Activated T-helper 2 cell treated with anti-CD3 and anti-CD28 coated beads, Interferon-gamma antibody, Interleukin-2, Interleukin-4, amounts not matched to agents 10 μg/mL and 5 μg/mL and 100 μg/mL, durations not matched to agents 14 hours and 24 hours and 36 hours (primary cell): ENCODE measurements at regions of chrX and their contacts with region 1.

Region 1: DNA sequence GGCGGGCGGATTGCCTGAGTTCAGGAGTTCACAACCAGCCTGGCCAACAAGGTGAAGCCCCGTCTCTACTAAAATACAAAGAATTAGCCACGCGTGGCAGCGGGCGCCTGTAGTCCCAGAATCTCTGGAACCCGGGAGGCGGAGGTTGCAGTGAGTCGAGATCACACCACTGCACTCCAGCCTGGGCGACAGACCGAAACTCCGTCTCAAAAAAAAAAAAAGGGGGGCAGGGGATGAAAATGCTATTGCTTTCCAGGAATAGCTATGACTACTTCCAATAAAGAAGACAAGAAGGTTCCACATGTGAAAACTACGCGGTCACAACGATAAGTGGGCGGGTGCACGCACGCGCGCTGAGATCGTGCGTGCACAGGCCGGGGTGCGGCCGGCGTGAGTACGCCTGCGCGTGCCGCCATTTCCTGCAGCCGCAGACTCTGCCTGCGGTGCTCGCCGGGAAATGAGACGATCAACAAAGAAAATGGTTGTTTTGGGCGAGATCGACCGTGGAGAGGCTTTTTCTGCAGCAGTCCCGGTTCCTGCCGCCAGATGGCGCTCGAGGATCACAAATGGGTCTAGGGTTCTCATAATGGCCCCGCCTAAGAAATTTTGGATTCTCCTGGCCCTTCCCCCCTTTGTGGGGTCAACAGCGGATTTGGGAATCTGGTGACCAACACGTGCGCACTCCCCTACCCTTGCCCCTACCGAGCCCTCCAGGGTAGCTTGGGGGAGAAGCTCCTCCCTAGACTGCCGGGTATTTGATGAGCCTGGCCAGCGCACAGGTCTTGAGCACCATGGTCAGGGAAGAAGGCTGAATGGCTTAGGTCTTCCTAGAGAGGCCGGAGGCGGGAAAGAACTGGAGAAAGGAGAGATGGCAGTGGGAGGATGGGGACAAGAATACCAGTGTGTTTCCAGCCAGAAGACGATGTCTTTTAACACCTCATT is 35.1 kb downstream of the PNMA5 start:
- DNase-seq: peak; percentile 82
- H3K4me3 Mint-ChIP-seq: peak overlapping the region; percentile 47
- H3K27ac Mint-ChIP-seq: peak overlapping the region; percentile 81
- H3K4me1 Mint-ChIP-seq: peaks cover 4% of the 10 kb centered on the region
- H3K27me3 Mint-ChIP-seq: no peaks in the 10 kb centered on the region

Region 2: DNA sequence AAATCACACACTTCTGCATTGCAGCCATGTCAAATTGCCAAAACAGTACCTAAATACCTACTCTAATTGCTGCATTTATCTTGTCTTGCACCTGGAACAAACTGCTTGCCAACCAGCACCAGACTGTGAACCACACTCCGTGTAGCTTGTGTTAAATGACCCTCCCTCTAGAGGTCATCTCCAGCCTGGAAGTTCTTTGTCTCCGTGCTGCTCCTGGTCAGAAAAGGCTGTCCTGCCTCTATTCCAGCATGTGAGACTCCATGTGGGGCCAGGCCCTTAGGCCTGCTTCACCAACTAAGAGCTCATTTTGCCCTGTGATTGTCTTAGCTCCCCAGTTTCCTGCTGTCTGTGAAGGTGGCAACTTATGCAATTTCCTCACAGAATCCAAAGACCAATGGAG is 1196.0 kb before region 1 on chrX:
- intact Hi-C with region 1: no loop called
- DNase-seq: no peak
- H3K4me3 Mint-ChIP-seq: no peak overlapping the region
- H3K27ac Mint-ChIP-seq: no peak overlapping the region
- H3K4me1 Mint-ChIP-seq: no peaks in the 10 kb centered on the region
- H3K27me3 Mint-ChIP-seq: no peaks in the 10 kb centered on the region

Region 3: DNA sequence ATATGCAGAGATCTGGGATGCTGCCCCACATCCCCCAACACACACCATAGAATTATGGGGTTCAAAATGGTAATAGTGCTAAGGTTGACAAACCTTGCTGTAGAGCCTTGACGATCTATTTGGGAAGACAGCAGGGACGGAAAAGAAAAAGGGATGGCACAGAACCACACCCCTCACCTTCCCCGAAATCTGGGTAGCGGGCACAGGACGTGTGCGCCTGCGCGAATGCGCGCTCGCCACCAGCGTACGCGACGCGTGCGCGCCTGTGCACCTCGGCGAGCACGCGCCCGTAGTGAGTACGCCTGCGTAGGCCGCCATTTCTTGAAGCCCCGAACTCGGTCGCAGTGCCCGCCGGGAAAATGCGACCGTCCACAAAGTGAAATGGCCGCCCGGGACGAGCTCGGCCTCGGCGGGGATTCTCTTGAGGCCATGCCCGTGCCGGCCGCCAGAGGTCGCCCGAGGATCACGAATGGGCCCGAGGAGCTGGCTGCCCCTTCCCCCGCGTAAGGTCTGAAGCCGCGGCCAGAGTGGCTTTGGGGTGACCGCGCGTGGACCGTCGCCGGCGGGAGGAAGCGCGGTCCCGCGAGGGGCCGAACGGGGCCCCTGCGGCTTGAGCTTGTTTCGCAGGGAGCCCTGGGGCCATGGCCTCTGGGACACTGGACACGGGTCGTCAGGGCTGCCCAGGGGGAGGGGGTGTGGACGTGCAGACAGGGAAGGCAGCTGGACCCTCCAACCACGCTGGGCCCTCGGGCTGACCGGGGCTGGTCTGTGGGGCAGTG is 17.3 kb before region 1 on chrX:
- intact Hi-C with region 1: loop called (anchors 1 kb)
- DNase-seq: peak; percentile 84
- H3K4me3 Mint-ChIP-seq: peak overlapping the region; percentile 80
- H3K27ac Mint-ChIP-seq: peak overlapping the region; percentile 76
- H3K4me1 Mint-ChIP-seq: peaks cover 7% of the 10 kb centered on the region
- H3K27me3 Mint-ChIP-seq: peaks cover 2% of the 10 kb centered on the region

Region 4: GRCh38 chrX:153003981-153004380 is 45.2 kb after region 1 on chrX:
- intact Hi-C with region 1: no loop called
- DNase-seq: no peak
- H3K4me3 Mint-ChIP-seq: no peak overlapping the region
- H3K27ac Mint-ChIP-seq: no peak overlapping the region
- H3K4me1 Mint-ChIP-seq: no peaks in the 10 kb centered on the region
- H3K27me3 Mint-ChIP-seq: peaks cover 10% of the 10 kb centered on the region

Region 5: DNA sequence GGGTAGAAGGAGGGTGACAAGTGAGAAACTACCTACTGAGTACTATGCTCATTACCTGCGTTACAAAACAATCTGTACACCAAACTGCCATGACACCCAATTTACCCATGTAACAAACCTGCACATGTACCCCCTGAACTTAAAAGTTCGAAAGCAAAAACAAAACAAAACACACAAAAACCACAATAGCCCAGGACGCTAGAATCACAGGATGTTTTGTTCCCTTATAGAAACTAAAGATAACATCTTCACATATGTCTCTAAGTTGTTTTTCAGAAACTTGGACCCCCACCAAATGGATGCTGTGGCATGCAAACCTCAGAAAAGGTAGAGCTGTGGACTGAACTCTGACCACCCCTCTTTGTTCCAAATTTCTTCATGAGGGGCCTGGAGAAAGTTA is 60.4 kb after region 1 on chrX:
- intact Hi-C with region 1: no loop called
- DNase-seq: no peak
- H3K4me3 Mint-ChIP-seq: no peak overlapping the region
- H3K27ac Mint-ChIP-seq: no peak overlapping the region
- H3K4me1 Mint-ChIP-seq: peaks cover 15% of the 10 kb centered on the region
- H3K27me3 Mint-ChIP-seq: peaks cover 16% of the 10 kb centered on the region

Region 6: GRCh38 chrX:153470435-153471363 is 511.9 kb after region 1 on chrX and contains the start of gene HAUS7:
- intact Hi-C with region 1: loop called (anchors 5 kb)
- DNase-seq: peak; percentile 81
- H3K4me3 Mint-ChIP-seq: peak within 1 kb of the TSS; percentile 84
- H3K27ac Mint-ChIP-seq: peak within 1 kb of the TSS; percentile 72
- H3K4me1 Mint-ChIP-seq: peaks cover 2% of the 10 kb centered on the region
- H3K27me3 Mint-ChIP-seq: no peaks in the 10 kb centered on the region
- total RNA-seq, gene HAUS7: 58.2 and 62.0 TPM in 2 replicates